ENCODE measurements at regions of chr15 and their contacts with region 1.

Region 1: DNA sequence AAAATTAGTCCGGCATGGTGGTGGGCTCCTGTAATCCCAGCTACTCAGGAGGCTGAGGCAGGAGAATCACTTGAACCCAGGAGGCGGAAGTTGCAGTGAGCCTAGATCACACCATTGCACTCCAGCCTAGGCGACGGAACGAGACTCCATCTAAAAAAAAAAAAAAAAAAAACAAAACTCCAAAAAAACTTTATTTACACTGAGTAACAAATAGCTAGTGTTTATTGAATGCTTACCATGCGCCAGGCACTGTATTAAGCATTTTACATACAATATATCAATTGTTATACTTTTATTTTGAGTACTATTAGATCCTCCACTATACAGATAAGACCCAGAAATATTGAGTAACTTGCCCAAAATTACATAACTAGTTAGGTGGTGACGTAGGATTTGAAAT is 17.4 kb upstream of the ARIH1 start:
- DNase-seq: no peak
- ATAC-seq: no peak
- H3K4me3 ChIP-seq: no peak overlapping the region
- H3K27ac ChIP-seq: no peak overlapping the region
- H3K4me1 ChIP-seq: no peaks in the 10 kb centered on the region
- H3K27me3 ChIP-seq: no peaks in the 10 kb centered on the region
- CTCF ChIP-seq: no peak

Region 2: DNA sequence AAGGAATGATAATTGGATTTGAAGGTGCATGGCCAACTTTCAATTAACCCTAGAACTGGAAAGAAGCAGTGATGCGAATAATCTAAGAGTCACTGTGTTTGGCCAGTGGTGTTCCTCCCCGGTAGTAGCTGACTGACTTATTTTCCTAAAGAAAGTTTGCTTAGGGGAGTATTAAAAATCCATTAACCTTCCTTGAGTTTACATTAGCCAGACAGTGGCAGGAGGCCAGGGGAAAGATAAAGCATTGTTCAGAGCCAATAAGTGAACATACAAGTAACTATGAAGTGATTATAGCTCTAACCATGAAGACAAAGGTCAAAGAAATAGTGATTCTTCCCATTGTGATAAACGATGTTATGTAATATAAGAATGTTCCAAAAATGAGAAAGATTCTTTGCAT is 67.5 kb before region 1 on chr15:
- CTCF ChIA-PET with region 1: no interaction called
- POLR2A ChIA-PET with region 1: interaction called, 13 read pairs
- in situ Hi-C with region 1: no loop called
- intact Hi-C with region 1: no loop called
- DNase-seq: no peak
- ATAC-seq: no peak
- H3K4me3 ChIP-seq: no peak overlapping the region
- H3K27ac ChIP-seq: no peak overlapping the region
- H3K4me1 ChIP-seq: no peaks in the 10 kb centered on the region
- H3K27me3 ChIP-seq: peaks cover 2% of the 10 kb centered on the region; the same call in 1 of the 2 replicates
- CTCF ChIP-seq: no peak

Region 3: DNA sequence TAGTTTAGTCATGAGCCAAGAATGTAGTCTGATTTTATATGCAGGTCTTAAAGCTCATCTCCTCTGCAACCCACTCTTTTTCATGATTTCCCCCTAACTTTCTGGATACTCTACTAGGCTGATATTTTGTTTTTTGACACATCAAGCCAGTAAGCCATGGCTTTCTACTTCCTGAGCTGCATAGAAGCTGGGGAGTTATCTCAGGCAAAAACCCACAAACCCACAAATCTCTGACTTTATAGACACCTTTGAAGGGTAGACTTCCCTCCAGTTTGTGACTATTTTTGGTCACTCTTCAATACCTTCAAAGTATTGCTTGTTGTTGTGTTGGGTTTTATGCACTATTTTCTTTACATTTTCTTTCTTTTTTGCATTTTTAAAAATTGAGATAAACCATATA is 29.9 kb before region 1 on chr15:
- CTCF ChIA-PET with region 1: no interaction called
- POLR2A ChIA-PET with region 1: no interaction called
- in situ Hi-C with region 1: no loop called
- intact Hi-C with region 1: no loop called
- DNase-seq: no peak
- ATAC-seq: no peak
- H3K4me3 ChIP-seq: no peak overlapping the region
- H3K27ac ChIP-seq: no peak overlapping the region
- H3K4me1 ChIP-seq: no peaks in the 10 kb centered on the region
- H3K27me3 ChIP-seq: peaks cover 2% of the 10 kb centered on the region; the same call in 1 of the 2 replicates
- CTCF ChIP-seq: no peak

Measured in Panc1 (cell line).